CD8-positive, alpha-beta T cell (primary cell): ENCODE measurements at regions of chr14 and their contacts with region 1.

Region 1: GRCh38 chr14:91872517-91873470 is 5.5 kb upstream of the TC2N start:
- DNase-seq: peak in 7 of 9 experiments; percentile 51 to 87 (median 77)
- ATAC-seq: peak; percentile 37
- H3K4me3 ChIP-seq: peak overlapping the region; percentile 31 to 47
- H3K4me3 Mint-ChIP-seq: peak overlapping the region; percentile 71
- H3K27ac ChIP-seq: peak overlapping the region; percentile 83 to 86
- H3K27ac Mint-ChIP-seq: peak overlapping the region; percentile 99
- H3K4me1 ChIP-seq: peaks cover 92% of the 10 kb centered on the region
- H3K4me1 Mint-ChIP-seq: peaks cover 99% of the 10 kb centered on the region
- H3K27me3 ChIP-seq: no peaks in the 10 kb centered on the region
- H3K27me3 Mint-ChIP-seq: no peaks in the 10 kb centered on the region
- CTCF ChIP-seq: no peak

Region 2: GRCh38 chr14:91138511-91139359 is 734.1 kb before region 1 on chr14:
- CTCF ChIA-PET with region 1: no interaction called
- POLR2A ChIA-PET with region 1: no interaction called
- intact Hi-C with region 1: no loop called
- DNase-seq: peak in 7 of 9 experiments; percentile 19 to 74 (median 41)
- ATAC-seq: peak; percentile 72
- H3K4me3 ChIP-seq: no peak overlapping the region
- H3K4me3 Mint-ChIP-seq: no peak overlapping the region
- H3K27ac ChIP-seq: no peak overlapping the region
- H3K27ac Mint-ChIP-seq: peak overlapping the region; percentile 22
- H3K4me1 ChIP-seq: peaks cover 8% of the 10 kb centered on the region
- H3K4me1 Mint-ChIP-seq: peaks cover 24% of the 10 kb centered on the region
- H3K27me3 ChIP-seq: no peaks in the 10 kb centered on the region
- H3K27me3 Mint-ChIP-seq: no peaks in the 10 kb centered on the region
- CTCF ChIP-seq: peak; percentile 54

Region 3: GRCh38 chr14:91249841-91250616 is 622.8 kb before region 1 on chr14:
- CTCF ChIA-PET with region 1: no interaction called
- POLR2A ChIA-PET with region 1: no interaction called
- intact Hi-C with region 1: loop called in 1 of 2 experiments (anchors 10 kb)
- DNase-seq: peak in 5 of 9 experiments; percentile 28 to 78 (median 45)
- ATAC-seq: no peak
- H3K4me3 ChIP-seq: no peak overlapping the region
- H3K4me3 Mint-ChIP-seq: peak overlapping the region; percentile 47
- H3K27ac ChIP-seq: peak overlapping the region; percentile 43 to 66
- H3K27ac Mint-ChIP-seq: peak overlapping the region; percentile 92
- H3K4me1 ChIP-seq: peaks cover 70% of the 10 kb centered on the region
- H3K4me1 Mint-ChIP-seq: peaks cover 78% of the 10 kb centered on the region
- H3K27me3 ChIP-seq: no peaks in the 10 kb centered on the region
- H3K27me3 Mint-ChIP-seq: no peaks in the 10 kb centered on the region
- CTCF ChIP-seq: no peak

Region 4: GRCh38 chr14:91858215-91858905 is 14.4 kb before region 1 on chr14:
- CTCF ChIA-PET with region 1: interaction called, 6 read pairs
- POLR2A ChIA-PET with region 1: interaction called, 67 read pairs
- intact Hi-C with region 1: loop called in 1 of 2 experiments (anchors 1 kb)
- DNase-seq: peak in 2 of 9 experiments; percentile 32 to 47
- ATAC-seq: peak; percentile 55
- H3K4me3 ChIP-seq: no peak overlapping the region
- H3K4me3 Mint-ChIP-seq: peak overlapping the region; percentile 38
- H3K27ac ChIP-seq: peak overlapping the region in 1 of 2 experiments; percentile 56
- H3K27ac Mint-ChIP-seq: peak overlapping the region; percentile 89
- H3K4me1 ChIP-seq: peaks cover 96% of the 10 kb centered on the region
- H3K4me1 Mint-ChIP-seq: peaks cover 86% of the 10 kb centered on the region
- H3K27me3 ChIP-seq: no peaks in the 10 kb centered on the region
- H3K27me3 Mint-ChIP-seq: no peaks in the 10 kb centered on the region
- CTCF ChIP-seq: no peak

Region 5: GRCh38 chr14:91883753-91884152 is 11.0 kb after region 1 on chr14:
- CTCF ChIA-PET with region 1: interaction called, 6 read pairs
- POLR2A ChIA-PET with region 1: interaction called, 48 read pairs
- intact Hi-C with region 1: loop called in 1 of 2 experiments (anchors 1 kb)
- DNase-seq: no peak
- ATAC-seq: no peak
- H3K4me3 ChIP-seq: no peak overlapping the region
- H3K4me3 Mint-ChIP-seq: no peak overlapping the region
- H3K27ac ChIP-seq: no peak overlapping the region
- H3K27ac Mint-ChIP-seq: no peak overlapping the region
- H3K4me1 ChIP-seq: peaks cover 20% of the 10 kb centered on the region
- H3K4me1 Mint-ChIP-seq: peaks cover 52% of the 10 kb centered on the region
- H3K27me3 ChIP-seq: no peaks in the 10 kb centered on the region
- H3K27me3 Mint-ChIP-seq: no peaks in the 10 kb centered on the region
- CTCF ChIP-seq: no peak

Region 6: DNA sequence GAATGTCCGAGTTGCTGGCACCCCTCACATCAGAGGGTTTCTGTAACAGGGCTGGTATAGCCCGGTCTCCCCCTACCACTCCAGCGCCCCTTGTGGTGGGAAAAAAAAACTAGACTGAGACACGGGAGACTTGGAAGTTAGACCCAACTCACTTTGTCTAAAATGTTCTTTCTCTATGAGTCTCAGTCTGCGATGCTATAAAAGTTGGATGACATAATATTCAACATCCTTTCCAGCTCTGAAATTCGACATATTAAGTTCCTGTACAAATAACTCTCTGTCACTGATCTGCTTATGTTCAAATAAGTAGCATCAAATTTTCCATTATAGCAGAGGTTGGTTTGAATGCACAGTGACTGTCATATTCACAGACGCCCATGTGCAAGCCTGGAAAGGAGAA is 20.2 kb after region 1 on chr14:
- CTCF ChIA-PET with region 1: interaction called, 6 read pairs
- POLR2A ChIA-PET with region 1: interaction called, 48 read pairs
- intact Hi-C with region 1: loop called in 1 of 2 experiments (anchors 1 kb)
- DNase-seq: peak in 3 of 9 experiments; percentile 36 to 61 (median 53)
- ATAC-seq: peak; percentile 30
- H3K4me3 ChIP-seq: no peak overlapping the region
- H3K4me3 Mint-ChIP-seq: no peak overlapping the region
- H3K27ac ChIP-seq: no peak overlapping the region
- H3K27ac Mint-ChIP-seq: peak overlapping the region; percentile 57
- H3K4me1 ChIP-seq: peaks cover 56% of the 10 kb centered on the region
- H3K4me1 Mint-ChIP-seq: peaks cover 66% of the 10 kb centered on the region
- H3K27me3 ChIP-seq: no peaks in the 10 kb centered on the region
- H3K27me3 Mint-ChIP-seq: no peaks in the 10 kb centered on the region
- CTCF ChIP-seq: peak; percentile 50

Region 7: DNA sequence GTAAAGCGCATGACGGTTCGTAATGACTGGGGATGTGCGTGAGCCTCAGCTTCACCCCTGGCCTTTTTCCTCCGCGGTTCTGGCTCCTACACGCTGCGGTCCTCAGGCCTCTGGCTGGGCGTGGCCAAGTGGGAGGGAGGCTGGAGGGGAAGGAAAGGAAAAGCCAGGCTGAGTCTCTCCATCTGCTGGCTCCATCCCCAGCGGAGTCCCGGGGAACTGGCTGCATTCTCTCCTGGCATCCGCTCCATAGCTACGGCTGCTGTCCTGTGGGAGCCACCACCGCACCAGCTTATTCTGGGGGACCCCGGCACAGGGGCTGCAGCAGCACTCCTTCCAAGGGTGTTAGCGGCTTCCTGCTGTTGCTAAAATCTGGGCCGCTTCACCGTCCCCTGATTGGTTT is 382.0 kb after region 1 on chr14:
- CTCF ChIA-PET with region 1: no interaction called
- POLR2A ChIA-PET with region 1: no interaction called
- intact Hi-C with region 1: no loop called
- DNase-seq: no peak
- ATAC-seq: no peak
- H3K4me3 ChIP-seq: no peak overlapping the region
- H3K4me3 Mint-ChIP-seq: no peak overlapping the region
- H3K27ac ChIP-seq: no peak overlapping the region
- H3K27ac Mint-ChIP-seq: no peak overlapping the region
- H3K4me1 ChIP-seq: peaks cover 3% of the 10 kb centered on the region
- H3K4me1 Mint-ChIP-seq: peaks cover 13% of the 10 kb centered on the region
- H3K27me3 ChIP-seq: peaks cover 5 to 6% of the 10 kb centered on the region in 2 experiments
- H3K27me3 Mint-ChIP-seq: peaks cover 36% of the 10 kb centered on the region
- CTCF ChIP-seq: no peak

Region 8: DNA sequence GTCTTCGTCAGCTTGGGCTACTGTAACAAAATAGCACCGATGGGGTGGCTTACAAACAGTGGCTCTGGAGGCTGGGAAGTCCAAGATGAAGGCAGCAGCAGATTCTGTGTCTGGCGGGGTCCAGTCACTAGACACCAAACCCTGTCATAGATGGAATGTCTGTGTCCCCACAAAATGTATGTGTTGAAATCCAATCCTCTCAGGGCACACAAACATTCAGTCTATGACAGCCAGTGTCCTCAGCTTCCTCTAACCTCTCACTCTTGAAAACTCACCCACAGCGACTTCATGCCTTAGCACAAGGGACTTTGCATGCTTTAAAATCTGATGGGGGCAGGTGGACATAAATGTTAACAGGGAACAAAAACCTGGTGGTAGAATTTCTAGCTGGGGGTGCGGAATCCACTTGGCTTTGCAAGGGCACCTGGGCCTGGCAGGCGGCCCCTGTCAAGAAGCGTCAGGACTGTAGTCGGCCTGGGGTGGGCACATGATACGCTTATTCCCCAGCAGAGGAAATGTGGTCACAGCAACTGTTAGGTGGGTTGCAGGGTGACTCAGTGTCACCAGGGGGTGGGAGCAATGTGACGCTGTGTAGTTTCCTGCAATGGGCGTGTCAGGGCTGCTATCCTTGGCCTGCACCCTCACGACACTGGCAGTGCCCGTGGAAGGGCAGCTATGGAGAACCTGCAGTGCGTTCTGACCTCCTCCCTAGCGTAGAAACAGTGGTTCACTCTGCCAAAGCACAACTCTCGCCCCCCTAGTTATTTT is 658.5 kb after region 1 on chr14:
- CTCF ChIA-PET with region 1: no interaction called
- POLR2A ChIA-PET with region 1: no interaction called
- intact Hi-C with region 1: loop called in 1 of 2 experiments (anchors 5 kb)
- DNase-seq: peak; percentile 65 to 98 (median 84)
- ATAC-seq: peak; percentile 85
- H3K4me3 ChIP-seq: peak overlapping the region in 1 of 2 experiments; percentile 15
- H3K4me3 Mint-ChIP-seq: peak overlapping the region; percentile 67
- H3K27ac ChIP-seq: peak overlapping the region; percentile 55 to 97
- H3K27ac Mint-ChIP-seq: peak overlapping the region; percentile 99
- H3K4me1 ChIP-seq: peaks cover 65% of the 10 kb centered on the region
- H3K4me1 Mint-ChIP-seq: peaks cover 75% of the 10 kb centered on the region
- H3K27me3 ChIP-seq: no peaks in the 10 kb centered on the region
- H3K27me3 Mint-ChIP-seq: no peaks in the 10 kb centered on the region
- CTCF ChIP-seq: no peak